A673 (cell line): ENCODE measurements at regions of chr7 and their contacts with region 1.

Region 1: DNA sequence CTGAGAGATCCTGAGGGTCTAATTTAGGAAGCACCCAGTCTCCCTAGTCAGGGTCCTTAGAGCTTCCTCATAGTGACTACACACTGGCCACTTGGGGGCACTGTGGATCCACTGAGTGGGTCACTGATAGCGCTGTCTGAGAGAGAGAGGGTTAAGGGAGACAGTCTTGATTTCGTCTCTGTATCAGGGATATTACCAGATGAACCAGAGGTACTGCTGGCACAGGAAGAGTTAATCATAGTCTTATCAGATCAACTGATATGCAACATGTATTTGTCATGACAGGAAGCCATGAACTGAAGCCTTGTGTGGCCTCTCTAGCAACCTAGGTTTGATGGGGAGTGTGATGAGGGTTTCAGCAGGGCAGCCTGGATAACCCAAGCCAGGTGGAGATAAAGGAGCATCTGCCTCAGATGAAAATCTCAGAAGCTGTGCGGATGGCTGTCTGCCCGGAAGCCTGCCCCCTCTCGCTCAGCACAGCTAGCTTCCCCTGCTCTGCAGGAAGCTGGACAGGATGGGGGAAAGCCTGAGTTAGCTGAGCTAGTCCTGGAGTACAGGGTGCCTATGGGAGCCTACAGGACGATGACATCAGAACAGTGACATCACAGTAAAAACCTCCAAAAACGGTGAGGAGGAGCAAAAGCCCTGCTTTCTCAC is 214.0 kb upstream of the PRSS1 start:
- DNase-seq: peak; percentile 80
- H3K4me3 ChIP-seq: no peak overlapping the region
- H3K27ac ChIP-seq: no peak overlapping the region
- H3K4me1 ChIP-seq: no peaks in the 10 kb centered on the region
- H3K27me3 ChIP-seq: peaks cover 21% of the 10 kb centered on the region
- CTCF ChIP-seq: peak; percentile 84

Region 2: DNA sequence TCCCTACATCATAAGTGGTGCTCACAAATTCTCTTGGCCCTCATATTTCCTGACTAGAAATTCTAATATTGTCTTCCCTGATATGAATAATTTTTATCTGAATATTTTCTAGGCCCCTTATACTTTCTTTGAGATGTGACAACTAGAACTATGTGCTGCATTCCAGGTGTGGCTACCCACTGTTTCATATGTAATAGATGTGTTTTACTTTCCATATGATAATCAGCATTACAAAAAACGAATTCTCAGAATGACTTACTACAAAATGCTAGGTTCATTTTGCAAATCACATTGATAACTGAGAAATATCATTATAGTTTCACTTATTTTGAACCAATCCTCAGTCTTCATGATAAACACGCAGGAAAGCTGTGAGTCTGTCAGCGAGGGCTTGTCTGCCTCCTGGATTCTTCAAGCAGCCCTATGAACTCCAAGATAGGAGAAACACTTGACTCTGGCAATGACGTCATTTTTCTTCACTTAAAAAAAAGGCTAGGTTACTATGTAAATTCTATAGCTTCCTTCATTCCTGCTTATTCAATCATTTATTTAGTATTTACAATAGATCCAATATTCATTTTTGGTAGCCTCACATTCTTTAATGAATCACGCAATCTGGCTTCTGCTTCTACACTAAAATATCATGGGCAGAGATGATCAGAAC is 822.5 kb before region 1 on chr7:
- CTCF ChIA-PET with region 1: no interaction called
- POLR2A ChIA-PET with region 1: no interaction called
- intact Hi-C with region 1: no loop called
- DNase-seq: no peak
- H3K4me3 ChIP-seq: no peak overlapping the region
- H3K27ac ChIP-seq: no peak overlapping the region
- H3K4me1 ChIP-seq: no peaks in the 10 kb centered on the region
- H3K27me3 ChIP-seq: peaks cover 20% of the 10 kb centered on the region
- CTCF ChIP-seq: no peak

Region 3: GRCh38 chr7:142587578-142588191 is 52.4 kb after region 1 on chr7:
- CTCF ChIA-PET with region 1: interaction called, 7 read pairs
- POLR2A ChIA-PET with region 1: no interaction called
- intact Hi-C with region 1: loop called (anchors 2 kb)
- DNase-seq: peak; percentile 61
- H3K4me3 ChIP-seq: no peak overlapping the region
- H3K27ac ChIP-seq: no peak overlapping the region
- H3K4me1 ChIP-seq: no peaks in the 10 kb centered on the region
- H3K27me3 ChIP-seq: no peaks in the 10 kb centered on the region
- CTCF ChIP-seq: peak; percentile 62